Lower leg skin (tissue), 4 donors: ENCODE measurements at regions of chr22 and their contacts with region 1.

Region 1: DNA sequence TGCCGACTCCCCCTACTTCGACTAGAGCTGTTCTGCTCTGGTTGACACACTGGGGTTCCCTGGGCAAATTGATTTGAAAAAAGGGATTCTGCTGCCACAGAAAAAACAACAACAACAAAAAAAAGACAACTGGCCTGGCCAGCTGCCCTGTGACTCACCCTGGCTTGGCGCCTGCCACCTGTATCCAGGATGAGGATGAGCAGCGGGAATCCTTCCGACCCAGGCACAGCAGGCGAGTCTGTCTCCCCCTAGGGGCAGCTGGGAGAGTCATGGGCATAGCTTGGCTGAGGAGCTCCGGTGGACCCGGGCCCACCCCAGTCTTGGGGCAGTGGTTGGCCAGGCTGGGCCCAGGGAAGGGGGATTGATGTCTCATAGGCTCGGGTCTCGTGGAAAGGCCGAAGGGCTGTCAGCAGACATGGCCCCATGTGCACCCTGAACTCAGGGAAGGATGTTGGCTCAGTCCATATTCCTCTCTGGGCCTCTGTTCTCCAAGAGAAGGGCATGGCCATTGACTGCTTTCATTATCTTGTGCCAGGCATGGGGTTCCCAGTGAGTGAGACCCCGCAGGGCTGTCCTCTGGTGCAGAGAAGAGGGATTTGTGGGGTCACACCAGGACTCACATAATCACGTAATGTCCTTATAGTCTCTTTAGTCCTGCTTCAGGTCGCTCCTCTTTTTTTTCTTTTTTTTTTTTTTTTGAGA is 10.4 kb upstream of the SUN2 start:
- DNase-seq: peak; percentile 47 to 91
- H3K4me3 ChIP-seq: no peak overlapping the region
- CTCF ChIP-seq: no peak
- POLR2A ChIP-seq: no peak

Region 2: GRCh38 chr22:38705235-38706100 is 60.8 kb before region 1 on chr22 and contains the start of gene GTPBP1:
- intact Hi-C with region 1: no loop called
- DNase-seq: peak; percentile 99 to 100
- H3K4me3 ChIP-seq: peak within 1 kb of the TSS; percentile 85
- CTCF ChIP-seq: no peak
- POLR2A ChIP-seq: peak in 1 of 2 donors; percentile 41
- total RNA-seq, gene GTPBP1: 53.1 to 79.9 (median 72.7) TPM

Region 3: GRCh38 chr22:38811241-38811640 is 45.0 kb after region 1 on chr22:
- intact Hi-C with region 1: no loop called
- DNase-seq: no peak
- H3K4me3 ChIP-seq: no peak overlapping the region
- CTCF ChIP-seq: no peak
- POLR2A ChIP-seq: no peak

Region 4: GRCh38 chr22:38973289-38974169 is 207.3 kb after region 1 on chr22:
- intact Hi-C with region 1: loop called (anchors 10 kb)
- DNase-seq: no peak
- H3K4me3 ChIP-seq: no peak overlapping the region
- CTCF ChIP-seq: no peak
- POLR2A ChIP-seq: no peak